ENCODE measurements at regions of chr4 and their contacts with region 1.

Region 1: GRCh38 chr4:187656959-187657358 is 338.6 kb upstream of the ZFP42 start:
- DNase-seq: no peak
- H3K4me3 ChIP-seq: no peak overlapping the region
- H3K27ac ChIP-seq: no peak overlapping the region
- H3K4me1 ChIP-seq: no peaks in the 10 kb centered on the region
- H3K27me3 ChIP-seq: no peaks in the 10 kb centered on the region
- CTCF ChIP-seq: no peak
- EP300 ChIP-seq: no peak
- POLR2A ChIP-seq: no peak

Region 2: GRCh38 chr4:187618701-187619281 is 38.2 kb before region 1 on chr4:
- intact Hi-C with region 1: no loop called
- DNase-seq: no peak
- H3K4me3 ChIP-seq: no peak overlapping the region
- H3K27ac ChIP-seq: no peak overlapping the region
- H3K4me1 ChIP-seq: no peaks in the 10 kb centered on the region
- H3K27me3 ChIP-seq: no peaks in the 10 kb centered on the region
- CTCF ChIP-seq: no peak
- EP300 ChIP-seq: no peak
- POLR2A ChIP-seq: no peak

Region 3: DNA sequence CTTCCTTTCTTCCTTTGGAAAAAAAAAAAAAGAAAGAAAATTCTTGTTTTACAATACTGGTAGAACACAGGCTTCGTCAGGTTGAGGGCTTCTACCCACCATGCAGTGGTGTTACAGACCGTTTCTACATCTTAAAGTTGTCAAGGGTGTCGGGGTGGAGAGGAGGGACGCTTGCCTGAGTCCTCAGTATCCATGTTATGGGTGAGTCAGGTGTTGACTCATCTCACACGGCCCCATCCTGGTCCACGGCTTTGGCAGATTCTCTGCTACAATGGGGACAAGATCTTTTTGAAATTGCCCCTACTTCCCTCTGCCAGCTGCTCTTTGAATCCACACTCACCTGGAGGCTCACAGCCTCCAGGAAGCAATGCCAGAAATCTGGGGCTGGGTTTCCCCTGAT is 28.3 kb after region 1 on chr4:
- intact Hi-C with region 1: loop called in 1 of 4 experiments (anchors 1 kb)
- DNase-seq: no peak
- H3K4me3 ChIP-seq: no peak overlapping the region
- H3K27ac ChIP-seq: no peak overlapping the region
- H3K4me1 ChIP-seq: no peaks in the 10 kb centered on the region
- H3K27me3 ChIP-seq: no peaks in the 10 kb centered on the region
- CTCF ChIP-seq: no peak
- EP300 ChIP-seq: no peak
- POLR2A ChIP-seq: no peak

Region 4: DNA sequence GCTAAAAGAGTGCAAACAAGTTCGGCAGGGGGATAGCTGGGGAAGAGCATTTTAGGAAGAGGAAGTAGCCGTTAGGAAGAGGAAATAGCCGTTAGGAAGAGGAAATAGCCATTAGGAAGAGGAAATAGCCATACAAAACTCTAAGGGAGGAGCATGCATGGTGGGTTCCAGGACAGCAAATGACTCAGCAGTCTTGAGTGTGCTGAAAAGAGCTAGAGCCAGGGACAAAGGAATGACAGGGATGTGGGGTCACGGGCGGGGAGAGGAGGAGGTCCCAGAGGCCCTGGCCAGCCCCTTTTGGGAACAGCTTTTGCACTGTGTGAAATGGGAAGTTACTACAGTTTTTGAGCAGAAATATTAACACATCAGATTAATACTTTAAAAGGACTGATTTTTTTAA is 1364.9 kb after region 1 on chr4:
- intact Hi-C with region 1: no loop called
- DNase-seq: peak in 3 of 5 donors; percentile 27 to 55 (median 33)
- H3K4me3 ChIP-seq: no peak overlapping the region
- H3K27ac ChIP-seq: no peak overlapping the region
- H3K4me1 ChIP-seq: no peaks in the 10 kb centered on the region
- H3K27me3 ChIP-seq: no peaks in the 10 kb centered on the region
- CTCF ChIP-seq: no peak
- EP300 ChIP-seq: no peak
- POLR2A ChIP-seq: no peak